Mammary epithelial cell (primary cell): ENCODE measurements at regions of chr6 and their contacts with region 1.

Region 1: GRCh38 chr6:125191916-125192609 is 38.5 kb downstream of the TPD52L1 start:
- DNase-seq: peak; percentile 87
- H3K4me3 ChIP-seq: peak overlapping the region in 1 of 3 experiments; percentile 13
- H3K27ac ChIP-seq: peak overlapping the region; percentile 95
- H3K4me1 ChIP-seq: peaks cover 29% of the 10 kb centered on the region
- H3K27me3 ChIP-seq: no peaks in the 10 kb centered on the region
- CTCF ChIP-seq: peak; percentile 84

Region 2: DNA sequence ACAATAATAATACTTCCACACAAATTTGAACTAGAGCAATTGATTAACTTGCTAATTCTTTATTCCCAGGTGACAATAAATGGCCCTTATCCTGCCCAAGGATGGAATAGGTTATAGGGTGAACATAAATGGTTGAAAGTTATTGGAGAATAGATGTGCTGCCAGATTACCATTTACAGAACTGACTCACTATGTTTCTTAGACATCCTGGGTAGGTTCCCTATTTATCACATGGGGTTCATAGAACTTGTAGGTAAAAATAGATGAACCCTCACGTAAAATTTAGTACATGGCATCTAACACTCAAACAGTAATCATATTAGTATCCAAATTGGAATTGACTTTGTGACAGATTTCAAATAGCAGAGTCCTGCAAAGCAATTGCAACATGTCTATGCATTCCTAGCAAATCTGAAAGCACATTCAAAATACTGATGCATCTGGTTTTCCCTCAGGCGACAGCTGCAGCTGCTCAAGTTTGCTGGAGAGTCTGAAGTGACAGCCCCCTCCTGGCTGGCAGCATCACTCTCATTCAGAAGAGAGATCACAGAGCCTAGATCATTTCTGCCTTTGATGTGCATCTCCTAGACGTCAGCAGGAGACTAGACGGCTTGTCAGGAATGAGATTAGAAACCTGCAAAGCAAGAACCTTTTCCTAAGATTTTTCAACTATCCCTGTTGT is 310.0 kb before region 1 on chr6:
- CTCF ChIA-PET with region 1: no interaction called
- dilution Hi-C with region 1: no loop called
- in situ Hi-C with region 1: no loop called
- intact Hi-C with region 1: no loop called
- DNase-seq: peak; percentile 31
- H3K4me3 ChIP-seq: peak overlapping the region in 1 of 3 experiments; percentile 3
- H3K27ac ChIP-seq: no peak overlapping the region
- H3K4me1 ChIP-seq: peaks cover 18% of the 10 kb centered on the region
- H3K27me3 ChIP-seq: no peaks in the 10 kb centered on the region
- CTCF ChIP-seq: no peak

Region 3: DNA sequence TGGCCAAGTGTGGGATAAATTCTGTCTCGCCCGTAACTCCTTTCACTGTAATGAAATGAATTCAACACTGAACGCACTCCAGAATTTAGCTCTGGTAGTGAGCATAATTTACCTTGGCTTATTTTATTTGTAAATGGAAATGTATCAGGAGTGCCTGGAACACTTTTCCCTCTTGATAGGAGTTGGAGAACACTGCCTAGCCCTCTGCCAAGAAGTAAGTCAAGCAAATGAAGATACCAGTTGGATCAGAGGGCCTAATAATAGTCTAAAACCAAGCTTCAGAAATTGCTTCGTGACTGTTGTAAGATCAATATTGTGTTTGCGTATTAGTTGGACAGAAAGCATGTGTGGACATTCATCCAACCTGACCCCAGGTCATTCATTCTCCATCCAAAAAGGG is 103.1 kb before region 1 on chr6:
- CTCF ChIA-PET with region 1: no interaction called
- dilution Hi-C with region 1: no loop called
- in situ Hi-C with region 1: no loop called
- intact Hi-C with region 1: no loop called
- DNase-seq: no peak
- H3K4me3 ChIP-seq: no peak overlapping the region
- H3K27ac ChIP-seq: no peak overlapping the region
- H3K4me1 ChIP-seq: no peaks in the 10 kb centered on the region
- H3K27me3 ChIP-seq: no peaks in the 10 kb centered on the region
- CTCF ChIP-seq: no peak

Region 4: GRCh38 chr6:125201961-125202591 is 10.0 kb after region 1 on chr6:
- CTCF ChIA-PET with region 1: interaction called, 7 read pairs
- dilution Hi-C with region 1: no loop called
- in situ Hi-C with region 1: no loop called
- intact Hi-C with region 1: loop called (anchors 1 kb)
- DNase-seq: peak; percentile 89
- H3K4me3 ChIP-seq: peak overlapping the region in 2 of 3 experiments; percentile 6 to 24
- H3K27ac ChIP-seq: peak overlapping the region; percentile 72
- H3K4me1 ChIP-seq: peaks cover 28% of the 10 kb centered on the region
- H3K27me3 ChIP-seq: no peaks in the 10 kb centered on the region
- CTCF ChIP-seq: no peak

Region 5: GRCh38 chr6:125258651-125259349 is 66.7 kb after region 1 on chr6:
- CTCF ChIA-PET with region 1: no interaction called
- dilution Hi-C with region 1: no loop called
- in situ Hi-C with region 1: no loop called
- intact Hi-C with region 1: loop called (anchors 1 kb)
- DNase-seq: no peak
- H3K4me3 ChIP-seq: no peak overlapping the region
- H3K27ac ChIP-seq: no peak overlapping the region
- H3K4me1 ChIP-seq: peaks cover 16% of the 10 kb centered on the region
- H3K27me3 ChIP-seq: no peaks in the 10 kb centered on the region
- CTCF ChIP-seq: no peak

Region 6: DNA sequence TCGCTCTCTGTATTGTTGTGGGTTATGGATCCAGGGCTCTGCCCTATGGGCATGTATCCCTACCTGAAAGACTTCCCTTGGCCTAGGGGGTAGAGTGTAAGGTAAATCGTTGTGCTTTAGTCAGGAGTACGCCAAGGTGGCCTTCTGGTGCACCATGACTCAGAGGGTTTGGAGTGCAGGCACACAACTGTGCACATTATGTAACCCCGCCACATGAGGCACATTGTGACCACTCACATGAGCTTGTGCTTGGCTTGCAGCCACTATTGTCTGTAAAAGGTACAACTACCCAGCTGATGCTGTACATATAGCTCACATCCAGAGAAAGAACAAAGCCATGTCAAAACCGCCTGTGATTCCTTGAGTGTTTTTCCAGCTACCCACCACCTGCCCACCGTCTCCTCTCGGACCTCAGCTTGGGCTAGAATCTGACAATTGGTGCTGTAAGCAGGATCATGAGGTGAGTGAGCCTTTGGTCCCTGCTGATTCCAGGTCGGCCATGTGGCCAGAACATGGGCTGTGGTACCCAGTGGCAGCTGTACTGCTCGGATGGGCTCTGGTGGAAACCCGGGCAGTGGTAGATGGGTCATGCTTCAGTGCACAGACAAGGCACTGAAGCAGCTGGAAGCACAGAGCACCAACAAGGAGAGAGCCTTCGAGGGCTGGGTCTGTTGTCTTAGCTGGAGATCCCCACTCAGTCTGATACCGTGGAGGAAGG is 75.9 kb after region 1 on chr6:
- CTCF ChIA-PET with region 1: no interaction called
- dilution Hi-C with region 1: no loop called
- in situ Hi-C with region 1: no loop called
- intact Hi-C with region 1: loop called (anchors 2 kb)
- DNase-seq: peak; percentile 63
- H3K4me3 ChIP-seq: no peak overlapping the region
- H3K27ac ChIP-seq: no peak overlapping the region
- H3K4me1 ChIP-seq: peaks cover 10% of the 10 kb centered on the region
- H3K27me3 ChIP-seq: no peaks in the 10 kb centered on the region
- CTCF ChIP-seq: no peak

Region 7: GRCh38 chr6:125301435-125302391 is 109.7 kb after region 1 on chr6 and contains the start of gene HDDC2:
- CTCF ChIA-PET with region 1: no interaction called
- dilution Hi-C with region 1: no loop called
- in situ Hi-C with region 1: no loop called
- intact Hi-C with region 1: loop called (anchors 2 kb)
- DNase-seq: peak; percentile 62
- H3K4me3 ChIP-seq: peak within 1 kb of the TSS; percentile 66 to 83 (median 81)
- H3K27ac ChIP-seq: peak within 1 kb of the TSS; percentile 27
- H3K4me1 ChIP-seq: peaks cover 2% of the 10 kb centered on the region
- H3K27me3 ChIP-seq: no peaks in the 10 kb centered on the region
- CTCF ChIP-seq: no peak
- total RNA-seq, gene HDDC2: 39.5 to 76.6 TPM

Region 8: DNA sequence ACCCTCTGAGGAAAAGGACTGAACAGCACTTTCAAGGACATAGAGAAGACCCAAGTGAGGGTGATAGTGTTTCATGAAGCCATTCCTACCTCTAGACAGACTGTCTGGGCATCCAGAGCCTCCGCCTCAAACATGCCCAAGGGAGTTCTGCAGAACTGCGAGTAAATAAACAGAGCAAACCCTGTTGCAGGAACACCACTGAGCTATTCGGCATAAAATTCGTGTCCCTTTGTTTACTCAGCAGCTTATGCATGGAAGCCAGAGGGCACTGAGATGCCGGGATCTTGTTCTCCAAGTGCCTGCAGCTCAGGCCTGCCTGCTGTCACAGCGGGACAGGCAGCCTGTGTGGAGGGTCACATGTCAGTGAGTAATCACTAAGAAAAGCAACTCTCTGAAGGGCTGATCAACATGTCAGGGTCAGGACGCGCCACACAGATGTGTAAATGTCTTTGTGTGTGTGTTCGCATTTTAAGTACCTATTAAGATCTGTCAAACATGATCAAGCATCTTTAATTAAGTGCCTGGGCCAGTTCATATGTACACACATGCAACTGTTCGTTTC is 392.5 kb after region 1 on chr6:
- CTCF ChIA-PET with region 1: no interaction called
- dilution Hi-C with region 1: no loop called
- in situ Hi-C with region 1: no loop called
- intact Hi-C with region 1: no loop called
- DNase-seq: peak; percentile 1
- H3K4me3 ChIP-seq: no peak overlapping the region
- H3K27ac ChIP-seq: no peak overlapping the region
- H3K4me1 ChIP-seq: peaks cover 9% of the 10 kb centered on the region
- H3K27me3 ChIP-seq: no peaks in the 10 kb centered on the region
- CTCF ChIP-seq: no peak

Region 9: DNA sequence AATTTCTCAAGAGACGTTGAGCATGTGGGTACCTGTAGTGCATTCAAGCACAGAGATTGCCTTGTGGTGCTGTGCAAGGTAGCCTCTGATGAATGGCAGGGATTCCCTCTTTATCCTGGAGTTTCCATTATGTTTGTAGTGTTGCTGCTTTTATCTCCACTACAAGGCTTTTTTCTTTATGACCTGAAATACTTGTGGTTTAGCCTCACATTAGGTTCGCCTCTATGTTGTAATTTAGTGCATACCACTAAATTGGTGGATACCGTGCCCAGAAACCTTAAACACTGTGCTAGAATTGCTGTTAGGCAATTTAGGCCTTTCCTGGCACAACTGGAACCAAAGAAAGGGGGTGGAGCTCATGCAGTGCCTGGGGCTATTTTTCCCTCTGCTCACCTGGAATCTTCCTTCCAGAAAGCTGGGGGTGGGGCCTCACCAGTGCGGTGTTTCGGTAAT is 675.4 kb after region 1 on chr6:
- CTCF ChIA-PET with region 1: interaction called, 19 read pairs
- dilution Hi-C with region 1: no loop called
- in situ Hi-C with region 1: no loop called
- intact Hi-C with region 1: no loop called
- DNase-seq: peak; percentile 99
- H3K4me3 ChIP-seq: peak overlapping the region in 1 of 3 experiments; percentile 21
- H3K27ac ChIP-seq: peak overlapping the region; percentile 90
- H3K4me1 ChIP-seq: peaks cover 26% of the 10 kb centered on the region
- H3K27me3 ChIP-seq: no peaks in the 10 kb centered on the region
- CTCF ChIP-seq: no peak

Region 10: DNA sequence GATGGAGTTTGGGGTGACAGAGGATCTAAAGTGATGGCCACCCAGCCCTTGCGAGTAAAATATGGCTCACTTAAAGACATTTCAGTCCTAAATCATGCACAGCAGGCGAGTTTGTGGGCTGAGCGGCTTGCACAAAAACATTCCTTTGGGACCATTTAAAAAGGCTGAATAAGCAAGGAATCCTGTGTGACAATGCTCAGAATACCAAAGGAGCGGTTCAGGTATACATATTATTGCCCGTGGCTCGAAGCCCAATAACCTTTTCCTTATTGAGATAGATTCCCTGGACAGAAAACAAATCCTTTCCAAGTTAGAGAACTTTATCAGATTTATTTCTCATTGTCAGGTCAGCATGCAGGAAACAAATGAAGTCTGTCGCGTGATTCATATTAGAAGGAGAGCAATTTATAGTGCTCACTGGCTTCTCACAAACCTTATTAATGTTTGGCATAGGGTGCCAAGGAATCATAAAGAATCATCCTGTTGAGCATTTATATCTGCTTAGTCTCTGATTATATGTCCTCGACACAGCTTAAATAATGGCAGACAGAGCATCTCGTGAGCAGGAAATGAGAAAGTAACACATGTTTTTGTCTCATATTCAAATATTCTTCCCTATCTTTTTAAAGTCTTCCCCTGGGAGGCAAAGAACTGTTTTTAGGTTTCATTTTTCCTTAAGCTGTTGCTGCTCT is 915.6 kb after region 1 on chr6:
- CTCF ChIA-PET with region 1: no interaction called
- dilution Hi-C with region 1: no loop called
- in situ Hi-C with region 1: no loop called
- intact Hi-C with region 1: no loop called
- DNase-seq: no peak
- H3K4me3 ChIP-seq: no peak overlapping the region
- H3K27ac ChIP-seq: no peak overlapping the region
- H3K4me1 ChIP-seq: no peaks in the 10 kb centered on the region
- H3K27me3 ChIP-seq: no peaks in the 10 kb centered on the region
- CTCF ChIP-seq: no peak